ENCODE measurements at regions of chr3 and their contacts with region 1.

Region 1: GRCh38 chr3:150495563-150496168 is 50.6 kb downstream of the SERP1 start:
- DNase-seq: peak; percentile 75
- H3K4me3 ChIP-seq: no peak overlapping the region
- H3K27ac ChIP-seq: no peak overlapping the region
- H3K4me1 ChIP-seq: peaks cover 9% of the 10 kb centered on the region
- H3K27me3 ChIP-seq: no peaks in the 10 kb centered on the region
- CTCF ChIP-seq: peak; percentile 36 to 42
- POLR2A ChIP-seq: no peak

Region 2: DNA sequence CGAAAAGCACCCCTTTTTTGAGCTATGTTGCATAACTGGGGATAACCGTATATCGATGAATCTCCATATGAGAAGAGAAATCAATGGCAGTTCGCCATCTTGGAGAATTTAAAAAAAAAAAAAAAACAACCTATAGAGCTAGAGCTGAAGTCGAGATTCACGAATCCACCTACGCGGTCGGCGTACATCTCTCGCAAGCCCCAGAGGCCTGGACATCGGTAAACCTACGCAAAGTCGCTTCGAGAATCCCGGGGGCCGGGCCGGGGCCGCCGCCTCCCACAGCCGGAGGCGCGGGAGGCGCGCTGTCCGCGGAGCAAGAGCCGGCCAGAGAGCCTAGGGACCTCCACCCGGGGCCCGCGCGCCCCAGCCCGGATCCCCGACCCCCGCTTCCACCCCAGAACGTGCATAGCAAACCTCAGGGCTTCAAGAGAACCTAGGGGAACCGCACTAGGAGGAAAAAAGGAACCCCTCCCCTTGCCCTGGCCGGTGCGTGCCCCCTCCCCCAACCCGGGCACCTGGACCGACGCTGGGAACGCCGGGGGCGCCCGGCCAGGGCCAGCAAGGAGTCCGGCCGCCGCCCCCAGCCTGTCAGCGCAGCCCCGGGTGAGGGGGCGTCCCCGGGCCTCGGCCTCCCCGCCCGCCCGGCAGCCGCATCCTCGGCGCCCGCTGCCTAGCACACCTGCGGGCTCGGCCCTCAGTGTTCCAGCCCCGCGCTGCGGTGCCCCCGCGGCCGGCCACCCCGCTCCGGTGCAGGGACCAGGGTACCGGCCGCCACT is 525.5 kb before region 1 on chr3:
- CTCF ChIA-PET with region 1: interaction called, 15 read pairs
- POLR2A ChIA-PET with region 1: no interaction called
- dilution Hi-C with region 1: no loop called
- intact Hi-C with region 1: loop called (anchors 1 kb)
- DNase-seq: peak; percentile 90
- H3K4me3 ChIP-seq: peak overlapping the region; percentile 65 to 92 (median 88)
- H3K27ac ChIP-seq: peak overlapping the region; percentile 94
- H3K4me1 ChIP-seq: peaks cover 27% of the 10 kb centered on the region
- H3K27me3 ChIP-seq: peaks cover 0 to 3% of the 10 kb centered on the region in 2 experiments
- CTCF ChIP-seq: no peak
- POLR2A ChIP-seq: peak; percentile 30

Region 3: GRCh38 chr3:150227839-150228238 is 267.8 kb before region 1 on chr3:
- CTCF ChIA-PET with region 1: interaction called, 107 read pairs
- POLR2A ChIA-PET with region 1: no interaction called
- dilution Hi-C with region 1: no loop called
- intact Hi-C with region 1: loop called (anchors 1 kb)
- DNase-seq: peak; percentile 72
- H3K4me3 ChIP-seq: no peak overlapping the region
- H3K27ac ChIP-seq: no peak overlapping the region
- H3K4me1 ChIP-seq: peaks cover 27% of the 10 kb centered on the region
- H3K27me3 ChIP-seq: peaks cover 25 to 26% of the 10 kb centered on the region in 2 experiments
- CTCF ChIP-seq: peak; percentile 82 to 84
- POLR2A ChIP-seq: no peak

Region 4: DNA sequence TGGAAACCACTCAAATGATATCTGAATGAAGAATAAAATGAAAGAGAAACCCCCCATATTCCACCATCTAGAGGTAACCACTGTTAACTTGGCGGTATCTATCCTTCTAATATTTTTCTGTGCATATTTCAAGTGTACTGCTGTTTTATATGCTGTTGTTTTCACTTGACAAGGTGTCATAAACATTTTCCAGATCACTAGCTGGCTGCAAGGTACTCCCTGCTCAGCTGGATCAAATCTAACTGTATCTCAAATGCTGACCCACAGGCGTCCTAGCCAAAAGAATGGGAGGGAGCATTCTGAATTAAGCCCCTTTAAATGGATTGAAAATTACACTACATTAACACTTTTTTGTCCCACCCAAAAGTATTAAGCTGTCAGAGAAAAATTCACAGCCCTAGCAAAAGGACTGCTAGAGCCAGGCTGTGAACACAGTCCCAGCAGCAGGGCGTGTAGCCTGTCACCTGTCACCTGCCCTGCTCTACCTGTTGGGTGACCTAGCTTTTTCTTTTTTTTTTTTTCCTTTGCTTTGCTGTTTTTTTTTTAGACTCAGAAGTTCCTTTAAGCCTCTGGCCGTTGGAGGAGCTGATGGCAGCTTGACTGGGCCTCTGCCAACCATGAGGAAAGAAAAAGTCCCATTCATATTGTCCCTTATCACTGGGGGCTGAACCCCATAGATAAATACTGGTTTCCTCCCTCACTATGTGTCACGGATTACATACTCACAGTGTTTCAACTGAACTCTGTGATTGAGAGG is 181.2 kb before region 1 on chr3:
- CTCF ChIA-PET with region 1: interaction called, 12 read pairs
- POLR2A ChIA-PET with region 1: no interaction called
- dilution Hi-C with region 1: no loop called
- intact Hi-C with region 1: no loop called
- DNase-seq: peak; percentile 17
- H3K4me3 ChIP-seq: no peak overlapping the region
- H3K27ac ChIP-seq: no peak overlapping the region
- H3K4me1 ChIP-seq: peaks cover 4% of the 10 kb centered on the region
- H3K27me3 ChIP-seq: no peaks in the 10 kb centered on the region
- CTCF ChIP-seq: no peak
- POLR2A ChIP-seq: no peak

Region 5: DNA sequence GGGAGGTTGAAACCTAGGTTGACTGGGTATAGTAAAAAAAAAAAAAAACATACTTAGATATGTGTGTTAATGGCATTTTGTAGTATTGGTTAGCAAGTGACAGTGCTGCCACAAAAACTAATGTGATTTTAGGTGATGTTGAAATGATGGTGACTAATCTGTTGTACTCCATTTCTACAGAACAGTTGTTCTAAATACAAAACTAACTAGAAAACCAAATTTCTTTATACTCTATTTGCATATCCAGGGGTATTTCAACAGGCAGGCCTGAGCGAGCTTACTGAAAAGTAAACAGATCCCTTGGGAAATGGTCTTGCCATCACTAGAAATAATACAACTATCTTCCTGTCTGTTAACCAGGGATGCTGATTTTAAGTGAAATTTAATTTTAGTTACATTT is 67.1 kb before region 1 on chr3:
- CTCF ChIA-PET with region 1: interaction called, 14 read pairs
- POLR2A ChIA-PET with region 1: no interaction called
- dilution Hi-C with region 1: no loop called
- intact Hi-C with region 1: no loop called
- DNase-seq: no peak
- H3K4me3 ChIP-seq: no peak overlapping the region
- H3K27ac ChIP-seq: no peak overlapping the region
- H3K4me1 ChIP-seq: peaks cover 6% of the 10 kb centered on the region
- H3K27me3 ChIP-seq: no peaks in the 10 kb centered on the region
- CTCF ChIP-seq: no peak
- POLR2A ChIP-seq: no peak

Region 6: DNA sequence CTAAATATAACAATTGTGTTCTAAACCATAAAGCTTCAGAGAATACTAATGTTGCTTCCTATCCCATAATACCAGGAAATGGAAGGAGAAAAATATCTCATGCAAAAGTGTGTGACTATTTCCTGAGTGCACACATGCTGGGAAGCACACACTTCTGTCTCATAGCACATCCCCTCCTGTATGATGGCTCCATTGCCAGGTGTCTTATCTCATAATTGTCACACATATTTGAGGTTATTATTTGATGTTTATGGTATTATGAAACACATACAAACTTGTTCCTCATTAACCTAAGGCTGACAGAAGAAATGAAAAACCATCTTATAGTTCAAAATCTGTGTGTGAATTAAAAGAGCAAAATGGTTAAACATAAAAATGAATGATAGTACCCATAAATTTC is 14.8 kb before region 1 on chr3:
- CTCF ChIA-PET with region 1: interaction called, 23 read pairs
- POLR2A ChIA-PET with region 1: no interaction called
- dilution Hi-C with region 1: no loop called
- intact Hi-C with region 1: no loop called
- DNase-seq: no peak
- H3K4me3 ChIP-seq: no peak overlapping the region
- H3K27ac ChIP-seq: no peak overlapping the region
- H3K4me1 ChIP-seq: peaks cover 8% of the 10 kb centered on the region
- H3K27me3 ChIP-seq: no peaks in the 10 kb centered on the region
- CTCF ChIP-seq: no peak
- POLR2A ChIP-seq: no peak